Activated B cell treated with CpG ODN at 0.5 μM for 24 hours (primary cell): ENCODE measurements at regions of chr3 and their contacts with region 1.

Region 1: GRCh38 chr3:194103983-194104751 is 31.8 kb upstream of the HES1 start:
- DNase-seq: peak; percentile 75
- ATAC-seq: peak; percentile 87
- H3K4me3 Mint-ChIP-seq: peak overlapping the region; percentile 75
- H3K27ac Mint-ChIP-seq: peak overlapping the region; percentile 87
- H3K4me1 Mint-ChIP-seq: peaks cover 95% of the 10 kb centered on the region
- H3K27me3 Mint-ChIP-seq: no peaks in the 10 kb centered on the region
- CTCF ChIP-seq: no peak

Region 2: GRCh38 chr3:193554811-193555210 is 549.4 kb before region 1 on chr3 and contains the start of gene ATP13A4:
- CTCF ChIA-PET with region 1: no interaction called
- POLR2A ChIA-PET with region 1: no interaction called
- intact Hi-C with region 1: no loop called
- DNase-seq: no peak
- ATAC-seq: no peak
- H3K4me3 Mint-ChIP-seq: no peak within 1 kb of the TSS
- H3K27ac Mint-ChIP-seq: no peak within 1 kb of the TSS
- H3K4me1 Mint-ChIP-seq: no peaks in the 10 kb centered on the region
- H3K27me3 Mint-ChIP-seq: no peaks in the 10 kb centered on the region
- CTCF ChIP-seq: no peak
- total RNA-seq, gene ATP13A4: 3.4 TPM in 2 replicates

Region 3: DNA sequence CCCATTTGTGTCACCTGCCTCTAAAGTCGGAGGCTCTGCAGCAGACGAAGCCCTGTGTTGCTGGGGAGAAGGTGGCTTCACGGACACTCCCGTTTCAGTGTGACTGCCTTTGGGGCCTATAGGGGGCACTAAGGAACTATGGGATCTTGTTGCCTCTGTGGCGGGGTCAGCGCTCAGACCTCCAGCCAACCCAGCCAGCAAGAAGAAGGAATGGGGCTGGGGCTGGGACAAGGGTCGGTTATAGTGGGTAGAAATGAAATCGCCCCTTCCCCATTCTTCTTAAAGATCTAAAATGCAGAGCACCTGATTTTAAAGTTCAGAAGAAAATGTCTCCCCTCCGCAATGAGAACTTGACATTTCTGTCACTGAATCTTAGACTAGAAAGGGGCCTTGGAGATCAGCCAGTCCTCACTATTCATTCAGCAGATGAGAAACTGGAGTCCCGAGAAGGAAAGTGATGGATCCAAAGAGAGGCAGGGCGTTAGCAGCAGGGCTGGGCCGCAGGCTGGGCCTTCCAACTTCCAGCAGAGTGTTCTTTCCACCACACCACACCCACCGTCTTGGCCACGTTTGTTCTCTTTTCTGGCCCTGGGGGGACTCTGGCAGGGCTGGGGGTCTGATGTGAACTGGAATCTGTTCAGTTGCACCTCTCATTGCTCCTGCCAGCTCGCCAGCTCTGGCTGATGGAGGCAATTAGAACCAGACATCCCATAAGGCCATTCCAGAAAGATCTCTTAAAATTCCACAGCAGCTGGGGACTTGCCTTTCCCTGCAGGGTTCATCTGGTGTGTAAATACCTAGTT is 315.8 kb before region 1 on chr3:
- CTCF ChIA-PET with region 1: interaction called, 4 read pairs
- POLR2A ChIA-PET with region 1: no interaction called
- intact Hi-C with region 1: loop called (anchors 1 kb)
- DNase-seq: peak; percentile 36
- ATAC-seq: peak; percentile 98
- H3K4me3 Mint-ChIP-seq: no peak overlapping the region
- H3K27ac Mint-ChIP-seq: peak overlapping the region; percentile 15
- H3K4me1 Mint-ChIP-seq: peaks cover 16% of the 10 kb centered on the region
- H3K27me3 Mint-ChIP-seq: peaks cover 25% of the 10 kb centered on the region
- CTCF ChIP-seq: peak; percentile 34

Region 4: DNA sequence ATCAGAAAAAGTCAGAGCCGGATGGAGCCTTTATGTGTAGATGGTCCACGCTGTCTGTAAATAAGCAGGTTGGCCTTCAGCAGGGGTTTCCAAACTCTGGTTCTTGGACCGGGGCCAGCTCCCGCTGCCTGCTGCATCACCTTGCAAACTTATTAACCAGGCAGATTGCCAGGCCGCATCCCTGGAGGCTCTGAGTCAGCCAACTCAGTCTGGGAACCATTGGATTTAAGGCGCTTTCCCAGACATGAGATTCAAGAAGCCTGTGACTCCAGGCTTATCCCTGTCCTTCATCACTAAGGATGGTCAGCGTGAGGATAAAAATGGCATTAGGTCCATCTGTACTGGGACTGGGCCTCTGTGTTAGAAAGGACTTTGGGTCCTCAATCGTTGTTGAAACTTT is 298.7 kb before region 1 on chr3:
- CTCF ChIA-PET with region 1: no interaction called
- POLR2A ChIA-PET with region 1: no interaction called
- intact Hi-C with region 1: no loop called
- DNase-seq: no peak
- ATAC-seq: no peak
- H3K4me3 Mint-ChIP-seq: no peak overlapping the region
- H3K27ac Mint-ChIP-seq: no peak overlapping the region
- H3K4me1 Mint-ChIP-seq: no peaks in the 10 kb centered on the region
- H3K27me3 Mint-ChIP-seq: no peaks in the 10 kb centered on the region
- CTCF ChIP-seq: no peak

Region 5: GRCh38 chr3:193869221-193870201 is 234.7 kb before region 1 on chr3:
- CTCF ChIA-PET with region 1: no interaction called
- POLR2A ChIA-PET with region 1: interaction called, 8 read pairs
- intact Hi-C with region 1: loop called (anchors 1 kb)
- DNase-seq: no peak
- ATAC-seq: peak; percentile 9
- H3K4me3 Mint-ChIP-seq: peak overlapping the region; percentile 71
- H3K27ac Mint-ChIP-seq: no peak overlapping the region
- H3K4me1 Mint-ChIP-seq: peaks cover 85% of the 10 kb centered on the region
- H3K27me3 Mint-ChIP-seq: no peaks in the 10 kb centered on the region
- CTCF ChIP-seq: no peak

Region 6: GRCh38 chr3:194058189-194058571 is 46.0 kb before region 1 on chr3:
- CTCF ChIA-PET with region 1: interaction called, 3 read pairs
- POLR2A ChIA-PET with region 1: interaction called, 7 read pairs
- intact Hi-C with region 1: loop called (anchors 10 kb)
- DNase-seq: peak; percentile 34
- ATAC-seq: peak; percentile 78
- H3K4me3 Mint-ChIP-seq: peak overlapping the region; percentile 80
- H3K27ac Mint-ChIP-seq: peak overlapping the region; percentile 53
- H3K4me1 Mint-ChIP-seq: peaks cover 20% of the 10 kb centered on the region
- H3K27me3 Mint-ChIP-seq: no peaks in the 10 kb centered on the region
- CTCF ChIP-seq: no peak

Region 7: GRCh38 chr3:194089357-194090177 is 14.6 kb before region 1 on chr3:
- CTCF ChIA-PET with region 1: no interaction called
- POLR2A ChIA-PET with region 1: interaction called, 51 read pairs
- intact Hi-C with region 1: loop called (anchors 1 kb)
- DNase-seq: peak; percentile 41
- ATAC-seq: peak; percentile 86
- H3K4me3 Mint-ChIP-seq: peak overlapping the region; percentile 9
- H3K27ac Mint-ChIP-seq: peak overlapping the region; percentile 71
- H3K4me1 Mint-ChIP-seq: peaks cover 43% of the 10 kb centered on the region
- H3K27me3 Mint-ChIP-seq: no peaks in the 10 kb centered on the region
- CTCF ChIP-seq: no peak

Region 8: DNA sequence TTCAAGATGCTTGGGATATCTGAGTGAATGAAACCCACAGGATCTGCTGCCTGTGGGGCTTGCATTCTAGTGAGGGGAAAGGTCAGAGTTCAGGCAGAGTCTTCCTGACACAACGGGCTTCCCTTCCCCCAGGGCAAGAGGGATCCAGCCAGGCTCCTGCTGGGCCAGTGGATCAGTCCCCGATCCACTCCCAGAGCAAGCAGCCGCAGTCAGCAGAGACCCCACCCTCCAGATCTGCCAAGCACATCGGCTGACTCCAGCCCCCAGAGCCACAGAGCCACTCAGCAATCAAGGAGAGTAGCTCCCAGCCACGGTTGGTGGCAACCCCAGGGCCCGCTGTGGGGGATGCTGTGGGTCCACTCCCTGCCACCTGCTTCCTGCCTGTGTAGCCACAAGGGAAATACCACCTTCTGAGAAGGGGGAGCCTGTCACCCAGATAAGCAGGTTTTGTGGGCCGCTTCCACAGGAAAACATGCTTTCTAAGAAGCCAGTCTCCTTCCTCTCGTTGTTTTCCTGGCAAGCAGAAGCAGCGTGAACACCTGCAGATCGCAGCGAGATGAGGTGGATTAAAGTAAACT is 202.0 kb after region 1 on chr3:
- CTCF ChIA-PET with region 1: interaction called, 5 read pairs
- POLR2A ChIA-PET with region 1: interaction called, 17 read pairs
- intact Hi-C with region 1: loop called (anchors 1 kb)
- DNase-seq: peak; percentile 51
- ATAC-seq: peak; percentile 61
- H3K4me3 Mint-ChIP-seq: peak overlapping the region; percentile 70
- H3K27ac Mint-ChIP-seq: peak overlapping the region; percentile 84
- H3K4me1 Mint-ChIP-seq: no peaks in the 10 kb centered on the region
- H3K27me3 Mint-ChIP-seq: no peaks in the 10 kb centered on the region
- CTCF ChIP-seq: no peak

Region 9: DNA sequence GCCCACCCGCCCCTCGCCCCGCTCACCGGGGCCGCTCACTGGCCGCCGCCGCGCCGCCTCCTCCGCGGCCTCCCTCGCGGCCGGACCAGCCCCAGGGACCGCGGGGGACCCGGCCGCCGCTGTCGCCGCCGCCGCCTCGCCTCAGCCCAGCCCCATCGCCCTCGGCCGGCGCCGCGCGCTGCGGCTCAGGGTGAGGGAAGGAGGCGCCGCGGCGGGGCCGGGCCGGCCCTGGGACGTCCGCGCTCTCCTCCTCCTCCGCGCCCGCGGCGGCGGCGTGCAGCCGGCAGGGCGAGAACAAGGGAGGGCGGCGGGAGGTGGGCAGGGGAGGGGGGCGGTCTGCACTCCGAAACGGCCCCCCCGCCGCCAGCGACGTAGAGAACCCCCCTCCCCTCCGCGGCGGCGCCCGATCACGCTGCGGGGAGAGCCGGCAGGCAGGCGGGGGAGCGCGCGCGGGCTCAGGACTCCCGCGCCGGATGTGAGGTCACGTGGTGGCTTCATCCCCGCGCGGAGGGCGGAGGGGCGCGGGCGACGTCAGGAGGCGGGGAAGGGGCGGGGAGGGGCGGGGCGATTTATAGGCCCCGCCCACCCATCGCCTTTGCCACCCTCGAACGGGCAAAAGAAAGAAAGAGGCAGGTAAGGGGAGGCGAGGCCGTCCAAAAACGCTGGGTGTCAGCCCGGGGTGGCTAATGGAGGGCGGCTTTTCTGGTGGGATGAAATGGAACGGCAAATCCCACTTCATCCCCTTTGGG is 382.5 kb after region 1 on chr3 and contains the start of gene ATP13A3:
- CTCF ChIA-PET with region 1: no interaction called
- POLR2A ChIA-PET with region 1: interaction called, 7 read pairs
- intact Hi-C with region 1: loop called (anchors 10 kb)
- DNase-seq: peak; percentile 86
- ATAC-seq: peak; percentile 75
- H3K4me3 Mint-ChIP-seq: peak within 1 kb of the TSS; percentile 91
- H3K27ac Mint-ChIP-seq: peak within 1 kb of the TSS; percentile 88
- H3K4me1 Mint-ChIP-seq: peaks cover 63% of the 10 kb centered on the region
- H3K27me3 Mint-ChIP-seq: no peaks in the 10 kb centered on the region
- CTCF ChIP-seq: no peak
- total RNA-seq, gene ATP13A3: 79.8 and 91.9 TPM in 2 replicates